ENCODE measurements at regions of chr17 and their contacts with region 1.

Region 1: GRCh38 chr17:38982858-38983746 is 15.9 kb upstream of the FBXO47 start:
- DNase-seq: no peak
- H3K4me3 ChIP-seq: no peak overlapping the region
- H3K27ac ChIP-seq: no peak overlapping the region
- H3K4me1 ChIP-seq: peaks cover 0 to 14% (median 6%) of the 10 kb centered on the region in 6 donors
- H3K27me3 ChIP-seq: peaks cover 0 to 14% (median 0%) of the 10 kb centered on the region in 7 donors
- CTCF ChIP-seq: peak; percentile 58 to 88 (median 77)
- POLR2A ChIP-seq: no peak

Region 2: GRCh38 chr17:39174907-39175694 is 192.0 kb after region 1 on chr17:
- intact Hi-C with region 1: loop called (anchors 5 kb)
- DNase-seq: peak; percentile 92
- H3K4me3 ChIP-seq: peak overlapping the region in 1 of 8 donors; percentile 27
- H3K27ac ChIP-seq: no peak overlapping the region
- H3K4me1 ChIP-seq: peaks cover 0 to 15% (median 9%) of the 10 kb centered on the region in 6 donors
- H3K27me3 ChIP-seq: peaks cover 0 to 21% (median 0%) of the 10 kb centered on the region in 7 donors
- CTCF ChIP-seq: peak; percentile 53 to 93 (median 83)
- POLR2A ChIP-seq: no peak

Measured in spleen (tissue), 13 donors.